ENCODE measurements at regions of chr19 and their contacts with region 1.

Region 1: GRCh38 chr19:4815426-4816201 is 15.9 kb downstream of the TICAM1 start:
- DNase-seq: no peak
- H3K4me3 ChIP-seq: no peak overlapping the region
- CTCF ChIP-seq: no peak

Region 2: GRCh38 chr19:4624733-4625362 is 190.8 kb before region 1 on chr19:
- CTCF ChIA-PET with region 1: no interaction called
- POLR2A ChIA-PET with region 1: no interaction called
- DNase-seq: no peak
- H3K4me3 ChIP-seq: no peak overlapping the region
- CTCF ChIP-seq: peak; percentile 21

Region 3: DNA sequence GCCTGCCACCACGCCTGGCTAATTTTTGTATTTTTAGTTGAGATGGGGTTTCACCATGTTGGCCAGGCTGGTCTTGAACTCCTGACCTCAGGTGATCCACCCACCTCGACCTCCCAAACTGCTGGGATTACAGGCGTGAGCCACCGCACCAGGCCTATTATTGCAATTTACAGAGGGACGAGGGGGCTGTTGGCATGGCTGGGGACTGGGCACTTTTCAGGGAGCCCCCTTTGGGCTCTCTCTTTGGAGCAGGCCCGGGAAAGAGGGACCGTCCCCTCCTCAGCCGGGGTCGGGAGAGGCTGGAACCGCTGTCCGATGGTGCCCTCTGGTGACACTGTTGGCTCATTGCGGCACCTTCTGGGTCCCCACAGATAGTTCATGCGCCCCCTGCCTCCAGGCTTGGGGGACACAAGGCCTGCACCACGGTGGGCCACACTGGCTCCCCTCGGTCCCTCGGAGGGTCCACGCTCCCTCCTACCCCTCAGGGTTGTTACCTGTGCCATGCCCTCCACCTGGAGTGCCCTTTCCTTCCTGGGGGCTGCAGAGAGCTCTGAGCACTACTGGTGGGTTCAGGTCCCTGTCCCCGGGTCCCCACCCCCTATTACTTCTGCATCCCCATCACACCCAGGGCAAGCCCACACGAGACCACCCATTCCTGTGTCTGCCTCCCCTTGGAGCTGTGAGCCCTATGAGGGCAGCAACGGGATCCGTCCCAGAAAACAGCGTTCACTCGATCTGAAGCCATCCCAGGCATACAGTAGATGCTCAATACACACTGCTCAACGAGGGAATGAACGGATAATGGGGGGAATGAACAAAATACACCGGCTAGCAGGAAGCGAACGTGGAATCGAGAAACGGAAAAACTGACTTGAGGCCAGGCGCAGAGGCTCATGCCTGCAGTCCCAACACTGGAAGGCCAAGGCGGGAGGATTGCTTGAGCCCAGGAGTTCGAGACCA is 11.6 kb before region 1 on chr19:
- CTCF ChIA-PET with region 1: interaction called, 42 read pairs
- POLR2A ChIA-PET with region 1: no interaction called
- DNase-seq: no peak
- H3K4me3 ChIP-seq: no peak overlapping the region
- CTCF ChIP-seq: peak; percentile 87

Region 4: DNA sequence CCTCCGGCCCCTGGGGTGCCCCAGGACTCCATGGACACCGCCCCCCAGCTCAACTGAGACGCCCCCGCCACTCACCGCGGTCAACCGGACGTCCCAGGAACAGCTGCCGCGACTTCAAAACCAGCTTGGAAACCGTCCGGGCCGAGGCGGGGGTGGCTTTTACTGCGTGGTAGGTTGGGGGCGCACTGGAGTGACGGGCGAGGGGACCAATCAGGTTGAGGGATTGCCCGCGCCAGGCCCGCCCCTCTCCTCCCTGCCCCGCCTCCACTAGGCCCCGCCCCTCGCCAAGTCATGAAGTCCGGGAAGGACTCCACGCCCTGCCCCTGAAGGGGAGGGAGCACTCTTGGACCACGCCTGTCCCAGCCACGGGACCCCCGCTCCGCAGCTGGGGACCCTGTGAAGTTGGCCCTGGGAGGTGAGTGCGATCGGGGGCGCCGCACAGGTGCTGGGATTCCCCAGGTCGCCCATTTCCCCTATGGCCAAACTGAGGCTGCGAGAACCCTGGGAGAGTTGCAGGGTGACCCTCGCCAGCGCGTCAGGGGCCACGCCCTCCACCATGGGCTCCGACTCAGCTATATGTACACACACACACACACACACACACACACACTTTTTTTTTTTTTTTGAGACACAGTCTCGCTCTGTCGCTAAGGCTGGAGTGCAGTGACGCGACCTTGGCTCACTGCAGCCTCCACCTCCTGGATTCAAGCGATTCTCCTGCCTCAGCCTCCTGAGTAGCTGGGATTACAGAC is 52.1 kb after region 1 on chr19 and contains the start of gene PLIN3:
- CTCF ChIA-PET with region 1: interaction called, 80 read pairs
- POLR2A ChIA-PET with region 1: interaction called, 3 read pairs
- DNase-seq: peak; percentile 59
- H3K4me3 ChIP-seq: peak within 1 kb of the TSS; percentile 88
- CTCF ChIP-seq: no peak

Region 5: DNA sequence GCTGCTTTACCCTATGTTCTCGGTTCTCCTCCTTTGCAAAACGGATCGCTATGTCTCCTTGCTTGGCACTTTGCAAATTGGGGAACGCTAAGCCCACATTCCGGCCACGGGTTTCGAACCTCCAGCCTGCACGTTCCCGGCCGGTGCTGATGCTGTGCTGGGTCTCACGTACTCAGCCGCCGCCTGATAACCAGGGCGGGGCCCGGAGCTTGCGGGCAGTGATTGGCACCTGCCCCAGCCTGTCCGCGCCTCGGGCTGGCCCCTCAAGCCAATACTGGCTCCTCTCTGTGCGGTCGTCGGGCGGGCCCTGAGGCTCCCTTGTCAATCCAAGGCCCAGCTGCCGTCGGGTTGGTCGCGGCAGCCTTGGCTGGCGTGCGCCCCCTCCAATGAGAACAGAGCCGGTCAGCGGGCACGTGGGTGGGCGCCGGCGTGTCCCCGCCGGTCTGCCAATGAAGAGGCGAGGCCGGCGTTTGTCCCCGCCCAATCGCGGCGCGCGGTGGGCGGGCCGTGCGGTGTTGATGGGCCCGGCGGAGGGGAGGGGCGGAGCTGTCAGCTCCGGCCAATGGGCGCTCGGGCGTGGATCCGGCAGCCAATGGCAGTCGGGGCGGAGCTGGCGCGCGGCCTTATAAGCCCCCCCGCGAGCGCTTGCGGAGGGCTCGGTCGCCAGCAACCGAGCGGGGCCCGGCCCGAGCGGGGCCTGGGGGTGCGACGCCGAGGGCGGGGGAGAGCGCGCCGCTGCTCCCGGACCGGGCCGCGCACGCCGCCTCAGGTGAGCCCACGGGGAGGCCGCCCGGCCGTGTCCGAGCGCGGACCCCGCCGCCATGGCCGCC is 153.1 kb after region 1 on chr19 and contains the start of gene KDM4B:
- CTCF ChIA-PET with region 1: interaction called, 29 read pairs
- POLR2A ChIA-PET with region 1: no interaction called
- DNase-seq: peak; percentile 96
- H3K4me3 ChIP-seq: peak within 1 kb of the TSS; percentile 77
- CTCF ChIP-seq: no peak

Region 6: GRCh38 chr19:5018224-5019015 is 202.8 kb after region 1 on chr19:
- CTCF ChIA-PET with region 1: interaction called, 12 read pairs
- POLR2A ChIA-PET with region 1: no interaction called
- DNase-seq: no peak
- H3K4me3 ChIP-seq: no peak overlapping the region
- CTCF ChIP-seq: no peak

Measured in AG04449 (cell line).